Head of caudate nucleus (tissue), 42 donors: ENCODE measurements at regions of chr10 and their contacts with region 1.

Region 1: GRCh38 chr10:74262856-74263255 is 111.8 kb downstream of the ADK start:
- DNase-seq: no peak

Region 2: DNA sequence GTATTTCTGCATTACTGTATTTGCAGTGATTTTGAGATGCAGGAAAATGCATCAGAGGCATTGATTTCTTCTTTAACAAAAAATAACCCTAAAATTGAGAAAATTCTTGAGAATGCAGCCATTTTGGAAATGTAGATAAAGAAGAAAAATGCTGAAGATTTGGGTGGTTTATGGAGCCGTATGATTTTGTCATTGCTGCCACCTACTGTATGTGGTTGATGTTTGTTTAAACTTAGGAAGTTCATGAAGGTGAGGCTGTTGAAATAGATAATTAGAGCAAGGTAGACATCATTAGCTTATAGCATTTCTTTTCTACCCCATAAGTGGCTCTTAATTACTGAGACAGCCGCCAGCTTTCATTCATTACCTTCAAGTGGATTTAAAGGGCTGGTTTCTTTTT is 756.5 kb after region 1 on chr10:
- intact Hi-C with region 1: loop called (anchors 5 kb)
- DNase-seq: peak in 2 of 42 donors; percentile 28 to 55

Region 3: GRCh38 chr10:75099952-75100763 is 837.3 kb after region 1 on chr10:
- intact Hi-C with region 1: loop called (anchors 5 kb)
- DNase-seq: peak; percentile 71 to 94 (median 84)

Region 4: DNA sequence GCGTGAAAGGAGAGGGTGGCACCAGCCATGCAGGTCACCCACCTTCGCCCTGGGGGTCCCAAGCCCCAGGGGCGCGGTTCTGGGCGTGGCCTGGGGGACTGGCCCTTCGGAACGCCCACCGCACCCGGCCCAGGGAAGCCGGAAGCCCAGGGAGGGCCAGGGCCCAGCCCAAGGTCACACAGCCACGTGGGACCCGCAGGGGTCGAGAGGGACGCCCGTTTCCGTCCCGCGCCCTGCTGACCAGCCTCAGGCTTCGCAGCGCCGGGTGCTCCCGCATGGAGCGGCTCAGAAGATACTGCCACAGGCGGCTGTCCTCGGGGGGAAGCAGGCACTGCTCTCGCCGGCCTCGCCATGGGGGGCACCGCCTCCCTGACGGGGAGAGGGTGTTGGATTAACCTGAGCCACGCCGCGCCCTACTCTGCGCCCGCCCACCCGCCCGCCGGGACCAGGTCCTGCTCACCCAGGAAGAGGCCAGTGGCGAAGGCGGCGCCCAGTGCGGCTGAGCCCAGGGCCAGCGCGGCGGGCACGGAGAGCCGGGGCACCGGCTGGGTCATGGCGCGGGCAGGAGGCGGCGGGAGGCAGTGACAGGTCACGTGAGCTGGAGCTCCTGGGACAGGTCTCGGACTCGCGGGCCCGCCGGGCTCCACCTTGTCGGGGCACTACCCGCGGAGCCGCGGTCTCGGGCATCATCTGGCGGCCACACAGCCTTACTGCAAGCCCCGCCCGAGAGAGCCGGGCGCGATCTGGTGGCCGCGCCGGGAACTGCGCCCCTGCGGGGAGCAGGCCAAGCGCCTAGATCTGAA is 972.7 kb after region 1 on chr10 and contains the start of gene COMTD1:
- intact Hi-C with region 1: loop called (anchors 10 kb)
- DNase-seq: peak; percentile 86 to 97 (median 92)